Mammary epithelial cell (primary cell): ENCODE measurements at regions of chr14 and their contacts with region 1.

Region 1: DNA sequence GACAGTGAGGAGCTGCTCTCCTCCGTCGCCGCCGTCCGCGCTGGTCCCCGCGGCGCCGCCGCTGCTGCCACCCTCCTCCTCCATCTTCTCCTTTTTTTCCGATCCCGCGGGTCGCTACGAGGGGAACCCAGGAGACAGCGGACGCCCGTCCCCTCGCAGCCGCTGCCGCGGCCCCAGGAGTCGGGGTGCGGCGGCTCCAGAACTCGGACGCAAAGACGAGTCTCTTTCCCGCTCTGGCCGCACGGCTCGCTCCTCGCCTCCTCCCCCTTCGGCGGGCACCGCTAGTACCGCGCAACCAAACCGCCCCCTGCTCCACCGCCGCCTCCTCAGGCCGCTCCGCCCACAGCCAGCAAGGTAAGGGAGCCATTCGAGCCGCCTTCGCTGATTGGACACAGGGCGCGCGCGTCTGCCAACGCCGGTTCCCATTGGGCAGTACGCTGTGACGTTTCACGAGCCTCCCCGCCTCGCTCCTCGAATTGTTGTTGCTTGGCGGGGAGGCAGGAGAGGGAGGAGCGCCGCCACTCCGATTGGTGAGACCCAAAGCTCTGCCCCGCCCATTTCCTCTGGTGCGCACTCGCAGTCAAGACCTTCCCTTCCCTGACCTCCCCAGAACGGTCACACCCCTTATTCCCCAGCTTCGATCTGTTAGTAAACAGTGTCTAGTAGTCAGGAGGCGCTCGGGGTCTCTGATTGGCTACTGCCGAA is at the start of gene RPS6KA5:
- DNase-seq: peak; percentile 100
- H3K4me3 ChIP-seq: peak within 1 kb of the TSS; percentile 92 to 94 (median 93)
- H3K27ac ChIP-seq: peak within 1 kb of the TSS; percentile 93
- H3K4me1 ChIP-seq: peaks cover 22% of the 10 kb centered on the region
- H3K27me3 ChIP-seq: no peaks in the 10 kb centered on the region
- CTCF ChIP-seq: no peak
- total RNA-seq, gene RPS6KA5: 4.8 to 10.9 TPM

Region 2: DNA sequence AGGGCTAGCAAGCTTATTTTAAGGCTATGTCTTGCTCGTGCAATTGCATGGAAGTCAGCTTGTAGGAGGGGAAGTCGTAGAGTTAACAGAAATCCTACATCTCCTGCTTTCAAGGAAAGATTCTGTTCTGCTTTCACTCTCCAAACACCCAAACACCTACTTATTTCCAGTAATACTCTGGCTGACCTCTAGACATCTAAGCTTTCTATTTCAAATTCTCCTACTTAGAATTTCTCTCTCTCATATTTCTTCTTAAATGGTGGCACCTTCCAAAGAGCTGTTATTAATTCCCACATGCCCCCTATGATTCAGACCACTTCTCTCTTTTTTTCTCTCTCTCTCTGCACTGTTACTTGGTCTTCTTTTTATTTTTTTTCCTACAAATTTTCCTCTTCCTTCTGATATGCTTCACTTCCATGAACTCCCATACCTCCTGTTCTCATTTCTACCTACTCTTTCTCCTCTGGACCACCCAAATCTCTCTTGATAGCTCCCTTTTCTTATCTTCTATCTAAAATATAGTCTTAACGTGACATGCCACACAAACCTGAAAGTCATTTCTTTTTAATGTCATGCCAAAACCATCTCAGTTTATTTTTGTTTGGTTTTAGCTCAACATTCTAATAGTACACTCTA is 90.9 kb before region 1 on chr14:
- CTCF ChIA-PET with region 1: no interaction called
- dilution Hi-C with region 1: loop called (anchors 5 kb)
- in situ Hi-C with region 1: no loop called
- intact Hi-C with region 1: no loop called
- DNase-seq: no peak
- H3K4me3 ChIP-seq: no peak overlapping the region
- H3K27ac ChIP-seq: no peak overlapping the region
- H3K4me1 ChIP-seq: no peaks in the 10 kb centered on the region
- H3K27me3 ChIP-seq: no peaks in the 10 kb centered on the region
- CTCF ChIP-seq: no peak

Region 3: GRCh38 chr14:91009501-91010152 is 50.9 kb before region 1 on chr14:
- CTCF ChIA-PET with region 1: no interaction called
- dilution Hi-C with region 1: no loop called
- in situ Hi-C with region 1: no loop called
- intact Hi-C with region 1: loop called (anchors 5 kb)
- DNase-seq: no peak
- H3K4me3 ChIP-seq: no peak overlapping the region
- H3K27ac ChIP-seq: no peak overlapping the region
- H3K4me1 ChIP-seq: peaks cover 8% of the 10 kb centered on the region
- H3K27me3 ChIP-seq: no peaks in the 10 kb centered on the region
- CTCF ChIP-seq: no peak

Region 4: DNA sequence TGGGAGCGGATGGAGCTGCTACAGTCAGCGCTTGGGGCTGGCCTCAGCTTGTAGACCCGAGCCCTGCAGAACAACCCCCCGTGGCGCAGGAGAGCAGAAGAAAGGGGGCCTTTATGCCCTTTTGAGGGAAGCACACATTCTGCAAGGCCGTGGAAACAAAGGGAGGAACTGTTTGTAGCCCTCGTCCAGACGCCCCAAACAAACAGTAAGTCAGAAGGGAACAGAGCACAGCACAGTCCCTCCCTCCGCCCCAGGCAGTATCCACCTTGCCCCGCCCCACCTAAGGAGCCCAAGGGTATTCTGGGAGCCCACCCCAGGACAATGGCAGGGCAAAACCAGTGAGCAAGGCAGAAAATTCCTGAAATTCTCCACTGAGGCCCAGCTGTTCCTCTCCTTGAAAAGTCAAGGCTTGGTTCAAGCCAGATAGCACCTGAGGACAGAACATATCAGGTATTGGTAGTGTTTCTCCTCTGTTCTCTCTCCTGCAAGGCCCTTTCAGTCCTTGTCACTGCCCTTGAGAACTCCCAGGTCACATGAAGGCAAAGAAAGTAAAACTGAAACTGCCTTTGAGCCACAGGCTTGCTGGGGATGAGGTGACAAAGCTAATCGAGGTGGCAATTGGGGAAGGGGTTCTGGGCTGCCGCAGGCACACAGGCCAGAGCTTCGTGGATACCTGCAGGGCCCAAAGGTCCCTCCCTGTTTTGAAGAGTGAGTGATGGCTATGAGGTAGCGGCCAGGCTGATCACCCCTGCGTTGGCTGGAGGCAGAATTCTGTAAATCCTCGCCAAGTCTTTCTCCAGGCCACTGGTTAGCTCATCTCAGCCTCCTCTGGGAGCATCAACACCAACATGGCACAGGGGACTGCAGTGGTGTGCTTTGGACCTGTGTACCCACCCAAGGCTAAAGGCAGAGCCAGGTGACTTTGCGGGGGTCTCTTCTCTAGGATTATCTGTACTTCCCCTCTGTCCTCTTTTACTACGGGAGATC is 53.9 kb after region 1 on chr14:
- CTCF ChIA-PET with region 1: no interaction called
- dilution Hi-C with region 1: loop called (anchors 5 kb)
- in situ Hi-C with region 1: no loop called
- intact Hi-C with region 1: loop called (anchors 1 kb)
- DNase-seq: peak; percentile 85
- H3K4me3 ChIP-seq: peak overlapping the region; percentile 53 to 57 (median 56)
- H3K27ac ChIP-seq: peak overlapping the region; percentile 93
- H3K4me1 ChIP-seq: peaks cover 58% of the 10 kb centered on the region
- H3K27me3 ChIP-seq: no peaks in the 10 kb centered on the region
- CTCF ChIP-seq: no peak

Region 5: DNA sequence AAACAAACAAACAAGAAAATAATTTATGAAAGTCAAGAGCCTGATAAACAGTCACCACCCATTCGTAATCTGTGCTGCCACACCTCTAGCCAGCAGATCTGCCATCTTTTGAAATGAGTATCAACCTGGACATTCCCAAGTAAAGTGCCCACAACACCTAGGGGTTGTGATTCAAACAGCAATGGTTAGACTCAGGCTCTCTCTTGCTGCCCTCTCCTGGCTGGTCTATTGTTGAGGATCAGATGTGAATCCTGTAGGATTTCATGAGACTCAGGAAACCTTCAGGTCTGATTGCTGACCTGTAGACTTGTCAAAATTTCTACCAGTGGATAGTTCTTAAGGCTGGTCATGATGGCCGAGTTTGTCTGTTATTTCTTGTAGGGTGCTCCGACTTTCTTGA is 80.2 kb after region 1 on chr14:
- CTCF ChIA-PET with region 1: interaction called, 5 read pairs
- dilution Hi-C with region 1: no loop called
- in situ Hi-C with region 1: loop called in 1 of 2 experiments (anchors 5 kb)
- intact Hi-C with region 1: loop called (anchors 1 kb)
- DNase-seq: peak; percentile 59
- H3K4me3 ChIP-seq: no peak overlapping the region
- H3K27ac ChIP-seq: no peak overlapping the region
- H3K4me1 ChIP-seq: peaks cover 7% of the 10 kb centered on the region
- H3K27me3 ChIP-seq: no peaks in the 10 kb centered on the region
- CTCF ChIP-seq: peak; percentile 71 to 81

Region 6: DNA sequence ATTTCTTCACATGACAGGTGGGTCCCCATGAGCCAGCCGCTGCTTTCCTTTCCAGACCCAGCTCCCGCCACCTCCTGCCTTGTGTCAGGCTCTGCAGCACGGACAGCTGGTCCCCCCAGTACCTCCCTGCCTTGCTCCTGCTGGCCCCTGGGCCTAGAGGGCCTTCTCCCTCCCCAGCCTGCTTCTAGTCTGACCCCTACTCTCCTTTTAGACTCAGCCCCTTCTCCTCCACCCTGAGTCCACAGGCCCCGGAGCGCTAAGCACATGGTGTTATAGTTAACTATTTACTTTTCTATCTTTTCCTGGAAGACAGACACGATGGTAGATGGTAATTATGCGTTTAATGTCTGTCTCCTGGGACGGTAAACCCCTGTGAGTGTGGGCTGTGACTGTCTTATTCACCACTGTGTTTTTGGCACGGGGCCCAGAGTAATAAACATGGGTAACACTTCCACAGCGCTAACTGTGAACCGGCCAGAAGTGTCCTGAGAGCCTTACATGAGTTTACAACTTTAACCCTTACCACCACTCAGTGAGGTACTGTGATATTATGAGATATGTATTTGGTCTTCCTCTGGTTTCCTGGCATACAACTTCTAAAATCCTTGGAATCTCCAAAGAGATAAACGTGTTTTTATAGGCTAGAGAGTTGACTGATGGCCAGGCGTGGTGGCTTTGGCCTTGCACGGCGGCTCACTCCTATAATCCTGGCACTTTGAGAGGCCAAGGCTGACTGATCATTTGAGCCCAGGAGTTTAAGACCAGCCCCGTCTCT is 94.5 kb after region 1 on chr14:
- CTCF ChIA-PET with region 1: interaction called, 11 read pairs
- dilution Hi-C with region 1: no loop called
- in situ Hi-C with region 1: no loop called
- intact Hi-C with region 1: no loop called
- DNase-seq: peak; percentile 62
- H3K4me3 ChIP-seq: no peak overlapping the region
- H3K27ac ChIP-seq: no peak overlapping the region
- H3K4me1 ChIP-seq: peaks cover 25% of the 10 kb centered on the region
- H3K27me3 ChIP-seq: no peaks in the 10 kb centered on the region
- CTCF ChIP-seq: no peak